ENCODE measurements at regions of chr6 and their contacts with region 1.

Region 1: GRCh38 chr6:127186889-127187288 is 68.4 kb downstream of the RSPO3 start:
- DNase-seq: peak; percentile 37
- ATAC-seq: peak; percentile 88
- H3K4me3 ChIP-seq: no peak overlapping the region
- H3K27ac ChIP-seq: no peak overlapping the region
- H3K4me1 ChIP-seq: no peaks in the 10 kb centered on the region
- H3K27me3 ChIP-seq: no peaks in the 10 kb centered on the region
- CTCF ChIP-seq: peak; percentile 40 to 80 (median 73); a peak in 5 of 6 replicates
- POLR2A ChIP-seq: no peak
- RAD21 ChIP-seq: peak; percentile 57

Region 2: DNA sequence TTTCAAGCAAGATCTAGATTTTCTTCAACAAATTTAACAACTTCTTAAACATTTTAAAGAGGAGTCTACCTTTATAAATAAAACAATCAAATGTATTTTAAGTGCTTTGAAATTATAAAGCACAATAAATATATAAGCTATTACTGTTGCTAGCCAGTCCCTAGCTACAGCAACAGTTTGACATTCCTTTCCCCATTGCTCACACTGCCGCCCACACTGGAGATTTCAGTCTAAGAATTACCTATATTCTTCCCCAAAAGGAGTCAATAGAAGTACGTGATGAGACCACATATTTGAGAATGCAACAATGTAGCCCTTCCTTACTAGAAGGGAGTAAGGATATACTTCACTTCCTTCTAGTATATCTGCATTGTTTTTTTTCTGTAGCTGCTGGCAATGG is 14.4 kb after region 1 on chr6:
- CTCF ChIA-PET with region 1: interaction called, 13 read pairs
- POLR2A ChIA-PET with region 1: no interaction called
- RAD21 ChIA-PET with region 1: no interaction called
- intact Hi-C with region 1: no loop called
- DNase-seq: no peak
- ATAC-seq: no peak
- H3K4me3 ChIP-seq: no peak overlapping the region
- H3K27ac ChIP-seq: no peak overlapping the region
- H3K4me1 ChIP-seq: peaks cover 0 to 4% of the 10 kb centered on the region in 2 experiments; a peak in 1 of 4 replicates
- H3K27me3 ChIP-seq: no peaks in the 10 kb centered on the region
- CTCF ChIP-seq: no peak
- POLR2A ChIP-seq: no peak
- RAD21 ChIP-seq: no peak

Region 3: DNA sequence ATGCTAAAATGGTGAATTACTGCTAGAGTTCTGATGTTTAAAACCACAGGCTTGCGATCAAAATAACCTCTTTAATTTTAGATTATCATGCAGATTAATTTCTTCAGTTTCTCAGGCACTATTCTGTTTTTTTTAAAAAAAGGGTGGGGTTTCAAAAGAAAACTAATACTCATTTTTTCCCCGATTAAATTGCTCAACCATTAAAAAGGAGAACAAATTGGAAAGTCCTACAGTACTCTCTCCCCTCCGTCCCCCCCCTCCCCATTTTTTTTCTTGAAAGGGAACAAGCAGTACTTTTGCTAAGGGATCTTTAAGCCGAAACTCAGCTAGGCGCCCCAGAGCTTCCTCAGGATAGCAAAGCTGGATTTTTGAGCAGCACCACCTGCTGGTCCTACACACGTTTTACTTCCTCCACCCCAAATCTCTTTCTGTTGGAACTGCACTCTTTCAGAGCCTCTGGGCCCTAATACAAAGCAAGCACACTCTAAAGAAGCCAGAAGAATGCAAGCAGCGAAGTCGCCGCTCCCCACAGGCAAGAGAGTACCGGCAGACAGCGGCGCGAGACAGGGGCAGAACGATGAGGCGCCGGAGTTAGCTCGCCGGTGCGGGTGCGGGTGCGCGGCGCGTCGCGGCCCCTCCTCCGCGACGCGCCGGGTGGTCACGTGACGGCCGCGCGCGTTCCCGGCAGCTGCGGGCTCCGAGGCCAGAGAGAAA is 79.4 kb after region 1 on chr6 and contains the start of gene RNF146:
- CTCF ChIA-PET with region 1: interaction called, 15 read pairs
- POLR2A ChIA-PET with region 1: interaction called, 3 read pairs
- RAD21 ChIA-PET with region 1: interaction called in 1 of 2 experiments, 6 read pairs
- intact Hi-C with region 1: no loop called
- DNase-seq: peak; percentile 75
- ATAC-seq: peak; percentile 84
- H3K4me3 ChIP-seq: peak within 1 kb of the TSS; percentile 75 to 76
- H3K27ac ChIP-seq: peak within 1 kb of the TSS; percentile 90
- H3K4me1 ChIP-seq: peaks cover 3 to 13% of the 10 kb centered on the region in 2 experiments; a peak in 3 of 4 replicates
- H3K27me3 ChIP-seq: no peaks in the 10 kb centered on the region
- CTCF ChIP-seq: peak; percentile 64 to 74 (median 70); a peak in 5 of 6 replicates
- POLR2A ChIP-seq: peak; percentile 79
- RAD21 ChIP-seq: peak; percentile 52
- total RNA-seq, gene RNF146: 17.6 TPM

Region 4: GRCh38 chr6:127436578-127437110 is 249.8 kb after region 1 on chr6:
- CTCF ChIA-PET with region 1: no interaction called
- POLR2A ChIA-PET with region 1: no interaction called
- RAD21 ChIA-PET with region 1: no interaction called
- intact Hi-C with region 1: no loop called
- DNase-seq: no peak
- ATAC-seq: no peak
- H3K4me3 ChIP-seq: no peak overlapping the region
- H3K27ac ChIP-seq: no peak overlapping the region
- H3K4me1 ChIP-seq: no peaks in the 10 kb centered on the region
- H3K27me3 ChIP-seq: no peaks in the 10 kb centered on the region
- CTCF ChIP-seq: no peak
- POLR2A ChIP-seq: no peak
- RAD21 ChIP-seq: no peak

Region 5: GRCh38 chr6:127706216-127706615 is 519.3 kb after region 1 on chr6:
- CTCF ChIA-PET with region 1: no interaction called
- POLR2A ChIA-PET with region 1: no interaction called
- RAD21 ChIA-PET with region 1: no interaction called
- intact Hi-C with region 1: no loop called
- DNase-seq: no peak
- ATAC-seq: no peak
- H3K4me3 ChIP-seq: no peak overlapping the region
- H3K27ac ChIP-seq: no peak overlapping the region
- H3K4me1 ChIP-seq: no peaks in the 10 kb centered on the region
- H3K27me3 ChIP-seq: no peaks in the 10 kb centered on the region
- CTCF ChIP-seq: no peak
- POLR2A ChIP-seq: no peak
- RAD21 ChIP-seq: no peak

Measured in HCT116 (cell line).